ENCODE measurements at regions of chr22 and their contacts with region 1.

Region 1: GRCh38 chr22:50244420-50245213 is at the start of gene TUBGCP6:
- DNase-seq: peak; percentile 89 to 93 (median 91)
- H3K4me3 ChIP-seq: peak within 1 kb of the TSS; percentile 37 to 99
- H3K4me3 Mint-ChIP-seq: peak within 1 kb of the TSS; percentile 95 to 100 (median 98)
- H3K27ac ChIP-seq: peak within 1 kb of the TSS; percentile 98
- H3K27ac Mint-ChIP-seq: peak within 1 kb of the TSS; percentile 90 to 100 (median 99)
- H3K4me1 ChIP-seq: peaks cover 69% of the 10 kb centered on the region
- H3K4me1 Mint-ChIP-seq: peaks cover 23 to 64% (median 37%) of the 10 kb centered on the region in 4 donors
- H3K27me3 ChIP-seq: no peaks in the 10 kb centered on the region
- H3K27me3 Mint-ChIP-seq: no peaks in the 10 kb centered on the region
- total RNA-seq, gene TUBGCP6: 132 to 133 TPM

Region 2: DNA sequence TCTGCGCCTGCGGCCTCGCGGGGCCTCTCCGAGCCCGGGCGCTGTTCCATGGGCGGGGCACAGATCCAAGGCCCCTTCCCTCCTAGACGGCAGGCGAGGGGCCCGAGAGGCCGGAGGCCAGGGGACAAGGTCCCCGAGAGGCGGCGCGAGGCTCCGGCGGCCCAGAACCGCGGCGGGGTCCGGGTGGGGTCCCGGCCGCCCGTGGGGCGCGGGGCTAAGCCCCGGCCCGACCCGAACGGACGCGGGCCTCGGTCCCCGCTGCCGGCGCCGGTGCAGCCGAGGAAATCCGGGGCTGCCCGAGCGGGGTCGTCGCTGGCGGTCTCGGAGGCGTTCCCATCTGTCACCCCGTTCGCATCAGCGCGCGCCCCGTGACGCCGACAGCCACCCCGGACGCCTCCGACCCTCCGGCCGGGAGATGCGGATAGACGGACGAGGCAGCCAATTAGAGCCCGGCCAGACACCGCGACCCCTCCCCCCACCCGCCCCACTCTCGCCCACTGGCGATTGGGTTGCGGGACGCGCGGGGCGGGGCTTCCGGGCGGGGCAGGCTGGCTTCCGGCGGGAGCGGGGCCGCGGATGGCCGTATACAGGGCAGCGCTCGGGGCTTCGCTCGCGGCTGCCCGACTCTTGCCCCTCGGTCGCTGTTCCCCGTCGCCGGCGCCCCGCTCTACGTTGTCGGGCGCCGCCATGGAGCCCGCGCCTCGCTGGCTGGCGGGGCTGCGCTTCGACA is 44.0 kb before region 1 on chr22 and contains the start of gene SELENOO:
- CTCF ChIA-PET with region 1: no interaction called
- POLR2A ChIA-PET with region 1: no interaction called
- intact Hi-C with region 1: loop called (anchors 5 kb)
- DNase-seq: peak; percentile 83 to 92 (median 88)
- H3K4me3 ChIP-seq: peak within 1 kb of the TSS; percentile 29 to 55
- H3K4me3 Mint-ChIP-seq: peak within 1 kb of the TSS; percentile 79 to 94 (median 86)
- H3K27ac ChIP-seq: peak within 1 kb of the TSS; percentile 78
- H3K27ac Mint-ChIP-seq: peak within 1 kb of the TSS in 6 of 7 donors; percentile 72 to 89 (median 80)
- H3K4me1 ChIP-seq: peaks cover 22% of the 10 kb centered on the region
- H3K4me1 Mint-ChIP-seq: peaks cover 14 to 29% (median 24%) of the 10 kb centered on the region in 4 donors
- H3K27me3 ChIP-seq: no peaks in the 10 kb centered on the region
- H3K27me3 Mint-ChIP-seq: no peaks in the 10 kb centered on the region
- total RNA-seq, gene SELENOO: 33.8 to 34.8 TPM

Region 3: DNA sequence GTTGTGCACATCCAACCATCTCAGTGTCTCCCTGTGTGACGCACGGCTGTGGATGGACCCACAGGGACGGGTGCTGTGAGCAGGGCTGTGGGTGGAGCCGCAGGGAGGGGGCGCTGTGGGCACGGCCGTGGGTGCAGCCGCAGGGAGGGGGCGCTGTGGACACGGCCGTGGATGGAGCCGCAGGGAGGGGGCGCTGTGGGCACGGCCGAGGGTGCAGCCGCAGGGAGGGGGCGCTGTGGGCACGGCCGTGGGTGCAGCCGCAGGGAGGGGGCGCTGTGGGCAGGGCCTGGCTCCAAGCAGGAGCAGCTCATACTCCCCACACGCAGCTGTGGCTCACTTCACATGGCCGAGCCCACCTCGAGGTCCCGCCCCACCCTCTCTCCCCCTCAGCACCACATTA is 31.5 kb after region 1 on chr22:
- CTCF ChIA-PET with region 1: interaction called, 7 read pairs
- POLR2A ChIA-PET with region 1: interaction called, 26 read pairs
- intact Hi-C with region 1: loop called (anchors 2 kb)
- DNase-seq: peak in 3 of 5 donors; percentile 24 to 58 (median 52)
- H3K4me3 ChIP-seq: no peak overlapping the region
- H3K4me3 Mint-ChIP-seq: no peak overlapping the region
- H3K27ac ChIP-seq: no peak overlapping the region
- H3K27ac Mint-ChIP-seq: peak overlapping the region in 1 of 7 donors; percentile 66
- H3K4me1 ChIP-seq: peaks cover 6% of the 10 kb centered on the region
- H3K4me1 Mint-ChIP-seq: peaks cover 0 to 8% (median 3%) of the 10 kb centered on the region in 4 donors
- H3K27me3 ChIP-seq: no peaks in the 10 kb centered on the region
- H3K27me3 Mint-ChIP-seq: no peaks in the 10 kb centered on the region